ENCODE measurements at regions of chr7 and their contacts with region 1.

Region 1: DNA sequence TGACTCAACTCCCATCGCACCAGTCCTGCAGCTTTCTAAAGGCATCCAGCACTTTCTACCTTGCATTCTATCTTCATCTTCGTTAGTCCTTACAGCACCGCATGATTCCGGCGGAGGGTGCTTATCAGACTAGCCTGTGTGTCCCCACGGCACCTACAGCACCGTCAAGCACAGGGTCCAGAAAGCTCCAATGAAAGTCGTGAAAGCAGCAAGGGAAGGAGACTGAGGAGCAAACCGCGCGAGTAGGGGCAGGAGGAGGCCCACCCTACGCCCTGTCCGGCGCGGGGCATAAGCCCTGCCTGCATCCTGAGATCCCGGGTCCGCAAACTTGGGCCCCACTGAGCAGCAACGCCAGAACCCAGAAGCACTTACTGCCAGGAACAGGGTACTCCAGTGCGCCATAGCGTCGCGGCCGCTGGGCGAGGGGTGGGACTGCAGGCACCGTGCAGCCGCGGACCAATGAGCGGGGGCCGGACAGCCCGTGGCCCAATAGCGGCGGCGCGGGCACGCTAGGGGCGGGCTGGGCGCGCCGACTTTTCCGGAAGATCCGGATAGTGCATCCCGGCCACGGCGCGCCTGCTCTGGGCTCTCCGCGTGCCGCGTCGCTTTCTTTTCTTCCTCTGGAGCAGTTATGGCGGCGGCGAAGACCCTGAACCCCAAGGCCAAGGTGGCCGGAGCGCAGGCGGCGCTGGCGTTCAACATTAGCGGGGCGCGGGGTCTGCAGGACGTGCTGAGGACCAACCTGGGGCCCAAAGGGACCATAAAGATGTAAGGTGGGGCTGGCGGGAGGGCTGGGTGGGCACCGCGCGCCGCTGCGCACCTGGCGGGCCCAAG is 122.1 kb upstream of the VKORC1L1 start:
- DNase-seq: peak; percentile 90 to 95
- H3K4me3 ChIP-seq: peak overlapping the region; percentile 65
- H3K4me3 Mint-ChIP-seq: peak overlapping the region; percentile 90
- H3K27ac Mint-ChIP-seq: peak overlapping the region; percentile 89
- H3K4me1 ChIP-seq: peaks cover 15% of the 10 kb centered on the region
- H3K4me1 Mint-ChIP-seq: peaks cover 4% of the 10 kb centered on the region
- H3K27me3 ChIP-seq: no peaks in the 10 kb centered on the region
- H3K27me3 Mint-ChIP-seq: no peaks in the 10 kb centered on the region
- CTCF ChIP-seq: no peak

Region 2: GRCh38 chr7:65722345-65722792 is 28.4 kb before region 1 on chr7:
- CTCF ChIA-PET with region 1: no interaction called
- POLR2A ChIA-PET with region 1: no interaction called
- intact Hi-C with region 1: loop called (anchors 2 kb)
- DNase-seq: peak; percentile 76 to 85
- H3K4me3 ChIP-seq: no peak overlapping the region
- H3K4me3 Mint-ChIP-seq: no peak overlapping the region
- H3K27ac Mint-ChIP-seq: no peak overlapping the region
- H3K4me1 ChIP-seq: no peaks in the 10 kb centered on the region
- H3K4me1 Mint-ChIP-seq: no peaks in the 10 kb centered on the region
- H3K27me3 ChIP-seq: no peaks in the 10 kb centered on the region
- H3K27me3 Mint-ChIP-seq: no peaks in the 10 kb centered on the region
- CTCF ChIP-seq: peak; percentile 79 to 88

Region 3: DNA sequence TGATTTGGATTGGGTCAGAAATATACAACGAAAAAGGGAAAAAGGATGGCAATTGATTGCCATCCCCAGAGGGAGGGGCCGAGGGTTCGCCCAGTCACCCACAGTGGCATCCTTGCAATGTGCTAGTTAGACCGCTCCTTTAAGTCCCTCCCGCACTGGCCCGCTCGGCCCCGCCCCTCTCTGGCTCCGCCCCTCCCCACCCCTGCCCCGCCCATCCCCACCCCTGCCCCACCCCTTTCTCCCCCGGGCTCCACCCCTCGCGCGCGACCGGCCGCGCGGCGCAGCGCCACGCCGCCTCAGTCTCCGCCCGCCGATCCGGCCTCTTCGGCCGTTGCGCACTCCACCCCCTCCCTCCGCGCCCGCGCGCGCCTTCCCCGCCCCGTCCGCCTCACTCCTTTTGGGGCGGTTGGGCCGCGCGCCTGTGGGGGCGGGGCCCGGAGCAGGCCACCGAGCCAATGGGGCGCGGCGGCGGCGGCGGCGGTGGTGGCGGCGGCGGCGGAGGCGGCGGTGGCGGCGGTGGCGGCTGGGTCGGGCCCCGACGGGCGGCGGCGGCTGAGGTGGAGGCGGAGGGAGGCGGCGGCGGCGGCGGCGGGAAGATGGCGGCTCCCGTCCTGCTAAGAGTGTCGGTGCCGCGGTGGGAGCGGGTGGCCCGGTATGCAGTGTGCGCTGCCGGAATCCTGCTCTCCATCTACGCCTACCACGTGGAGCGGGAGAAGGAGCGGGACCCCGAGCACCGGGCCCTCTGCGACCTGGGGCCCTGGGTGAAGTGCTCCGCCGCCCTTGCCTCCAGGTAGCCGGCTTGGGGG is 122.3 kb after region 1 on chr7 and contains the start of gene VKORC1L1:
- CTCF ChIA-PET with region 1: no interaction called
- POLR2A ChIA-PET with region 1: no interaction called
- intact Hi-C with region 1: loop called (anchors 5 kb)
- DNase-seq: peak; percentile 96 to 97
- H3K4me3 ChIP-seq: peak within 1 kb of the TSS; percentile 63
- H3K4me3 Mint-ChIP-seq: peak within 1 kb of the TSS; percentile 77
- H3K27ac Mint-ChIP-seq: peak within 1 kb of the TSS; percentile 87
- H3K4me1 ChIP-seq: no peaks in the 10 kb centered on the region
- H3K4me1 Mint-ChIP-seq: no peaks in the 10 kb centered on the region
- H3K27me3 ChIP-seq: no peaks in the 10 kb centered on the region
- H3K27me3 Mint-ChIP-seq: no peaks in the 10 kb centered on the region
- CTCF ChIP-seq: no peak
- total RNA-seq, gene VKORC1L1: 35.2 and 35.5 TPM in 2 replicates

Measured in Caco-2 (cell line).